CD4-positive, alpha-beta T cell (primary cell): ENCODE measurements at regions of chr10 and their contacts with region 1.

Region 1: GRCh38 chr10:74176380-74177139 is 25.5 kb downstream of the ADK start:
- DNase-seq: peak; percentile 91 to 99 (median 94)
- ATAC-seq: peak; percentile 95
- H3K4me3 ChIP-seq: peak overlapping the region; percentile 84
- H3K4me3 Mint-ChIP-seq: peak overlapping the region; percentile 95
- H3K27ac ChIP-seq: peak overlapping the region; percentile 84 to 90
- H3K27ac Mint-ChIP-seq: peak overlapping the region; percentile 98
- H3K4me1 ChIP-seq: peaks cover 26% of the 10 kb centered on the region
- H3K4me1 Mint-ChIP-seq: peaks cover 47% of the 10 kb centered on the region
- H3K27me3 ChIP-seq: no peaks in the 10 kb centered on the region
- H3K27me3 Mint-ChIP-seq: no peaks in the 10 kb centered on the region
- CTCF ChIP-seq: no peak

Region 2: GRCh38 chr10:73591935-73592699 is 584.4 kb before region 1 on chr10:
- CTCF ChIA-PET with region 1: no interaction called
- POLR2A ChIA-PET with region 1: no interaction called
- intact Hi-C with region 1: no loop called
- DNase-seq: peak in 9 of 14 experiments; percentile 1 to 47 (median 21)
- ATAC-seq: peak; percentile 54
- H3K4me3 ChIP-seq: no peak overlapping the region
- H3K4me3 Mint-ChIP-seq: peak overlapping the region; percentile 65
- H3K27ac ChIP-seq: peak overlapping the region in 1 of 2 donors; percentile 10
- H3K27ac Mint-ChIP-seq: peak overlapping the region; percentile 55
- H3K4me1 ChIP-seq: peaks cover 9% of the 10 kb centered on the region
- H3K4me1 Mint-ChIP-seq: peaks cover 23% of the 10 kb centered on the region
- H3K27me3 ChIP-seq: no peaks in the 10 kb centered on the region
- H3K27me3 Mint-ChIP-seq: no peaks in the 10 kb centered on the region
- CTCF ChIP-seq: no peak

Region 3: DNA sequence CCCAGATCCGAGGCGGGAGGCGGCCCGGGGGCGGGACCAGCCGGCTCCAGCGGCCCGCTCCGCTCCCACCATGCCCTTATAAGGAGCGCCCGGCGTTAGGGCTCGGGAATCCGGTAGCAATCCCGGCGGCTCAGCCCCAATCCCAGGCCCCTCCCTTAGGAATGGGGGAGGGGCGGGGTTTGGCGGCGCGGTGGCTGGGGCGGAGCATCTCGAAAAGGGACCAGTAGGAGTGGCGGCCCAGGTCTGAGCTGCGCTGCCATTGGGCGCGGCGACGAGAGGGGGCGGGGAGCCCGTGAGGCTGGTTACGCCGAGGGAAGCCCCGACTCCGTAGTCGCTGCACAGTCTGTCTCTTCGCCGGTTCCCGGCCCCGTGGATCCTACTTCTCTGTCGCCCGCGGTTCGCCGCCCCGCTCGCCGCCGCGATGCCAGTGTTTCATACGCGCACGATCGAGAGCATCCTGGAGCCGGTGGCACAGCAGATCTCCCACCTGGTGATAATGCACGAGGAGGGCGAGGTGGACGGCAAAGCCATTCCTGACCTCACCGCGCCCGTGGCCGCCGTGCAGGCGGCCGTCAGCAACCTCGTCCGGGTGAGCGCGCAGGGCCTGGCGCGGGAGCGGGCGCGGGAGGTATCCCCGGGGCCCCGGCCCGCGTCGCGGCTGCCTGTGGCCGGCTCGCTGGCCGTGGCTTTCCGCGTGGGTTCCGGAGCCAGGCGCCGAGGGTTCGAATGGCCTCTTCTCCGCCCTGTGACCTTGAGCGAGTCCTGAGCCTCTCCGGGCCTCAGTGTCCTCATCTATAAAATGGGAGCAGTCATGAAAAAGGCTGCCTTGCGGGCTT is 178.6 kb before region 1 on chr10 and contains the start of gene VCL:
- CTCF ChIA-PET with region 1: no interaction called
- POLR2A ChIA-PET with region 1: no interaction called
- intact Hi-C with region 1: loop called in 1 of 2 experiments (anchors 10 kb)
- DNase-seq: peak; percentile 88 to 98 (median 94)
- ATAC-seq: peak; percentile 95
- H3K4me3 ChIP-seq: peak within 1 kb of the TSS; percentile 95
- H3K4me3 Mint-ChIP-seq: peak within 1 kb of the TSS; percentile 100
- H3K27ac ChIP-seq: peak within 1 kb of the TSS; percentile 45 to 84
- H3K27ac Mint-ChIP-seq: peak within 1 kb of the TSS; percentile 83
- H3K4me1 ChIP-seq: peaks cover 42% of the 10 kb centered on the region
- H3K4me1 Mint-ChIP-seq: peaks cover 62% of the 10 kb centered on the region
- H3K27me3 ChIP-seq: no peaks in the 10 kb centered on the region
- H3K27me3 Mint-ChIP-seq: no peaks in the 10 kb centered on the region
- CTCF ChIP-seq: no peak
- total RNA-seq, gene VCL: 18.5 to 19.7 TPM

Region 4: GRCh38 chr10:74067373-74068352 is 108.9 kb before region 1 on chr10:
- CTCF ChIA-PET with region 1: no interaction called
- POLR2A ChIA-PET with region 1: no interaction called
- intact Hi-C with region 1: no loop called
- DNase-seq: no peak
- ATAC-seq: no peak
- H3K4me3 ChIP-seq: no peak overlapping the region
- H3K4me3 Mint-ChIP-seq: no peak overlapping the region
- H3K27ac ChIP-seq: no peak overlapping the region
- H3K27ac Mint-ChIP-seq: no peak overlapping the region
- H3K4me1 ChIP-seq: no peaks in the 10 kb centered on the region
- H3K4me1 Mint-ChIP-seq: no peaks in the 10 kb centered on the region
- H3K27me3 ChIP-seq: no peaks in the 10 kb centered on the region
- H3K27me3 Mint-ChIP-seq: no peaks in the 10 kb centered on the region
- CTCF ChIP-seq: no peak

Region 5: GRCh38 chr10:74189999-74190421 is 13.4 kb after region 1 on chr10:
- CTCF ChIA-PET with region 1: interaction called, 6 read pairs
- POLR2A ChIA-PET with region 1: interaction called, 46 read pairs
- intact Hi-C with region 1: loop called in 1 of 2 experiments (anchors 1 kb)
- DNase-seq: peak in 10 of 14 experiments; percentile 7 to 64 (median 14)
- ATAC-seq: peak; percentile 52
- H3K4me3 ChIP-seq: peak overlapping the region; percentile 19
- H3K4me3 Mint-ChIP-seq: peak overlapping the region; percentile 32
- H3K27ac ChIP-seq: peak overlapping the region; percentile 25 to 81
- H3K27ac Mint-ChIP-seq: peak overlapping the region; percentile 88
- H3K4me1 ChIP-seq: peaks cover 20% of the 10 kb centered on the region
- H3K4me1 Mint-ChIP-seq: peaks cover 70% of the 10 kb centered on the region
- H3K27me3 ChIP-seq: no peaks in the 10 kb centered on the region
- H3K27me3 Mint-ChIP-seq: no peaks in the 10 kb centered on the region
- CTCF ChIP-seq: no peak

Region 6: DNA sequence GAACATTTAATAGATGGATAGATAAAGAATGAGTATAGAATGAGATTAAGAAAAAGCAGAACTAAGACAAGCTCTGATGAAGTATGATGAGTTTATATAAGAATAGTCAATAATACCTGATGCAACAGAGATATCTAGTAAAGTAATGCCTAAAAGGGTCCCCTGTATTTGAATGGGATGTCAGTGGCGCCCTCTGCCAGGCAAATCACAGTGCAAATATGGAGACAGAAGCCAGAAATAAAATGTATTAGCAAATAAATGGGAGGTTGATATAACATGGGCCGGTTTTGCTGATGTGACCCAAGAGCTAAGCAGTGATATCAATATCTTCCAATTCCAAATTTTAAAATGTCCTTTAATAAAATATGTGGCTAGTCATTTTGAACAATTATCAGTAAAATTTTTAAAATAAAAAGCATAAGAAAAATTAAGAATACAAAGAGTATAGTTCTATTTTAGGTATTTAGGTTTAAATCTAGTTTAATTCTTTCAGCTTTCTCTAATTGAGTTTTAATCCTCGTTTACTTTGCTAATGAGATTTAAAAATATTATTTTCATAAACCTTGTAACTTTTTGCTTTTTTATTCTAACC is 37.1 kb after region 1 on chr10:
- CTCF ChIA-PET with region 1: interaction called, 3 read pairs
- POLR2A ChIA-PET with region 1: interaction called, 4 read pairs
- intact Hi-C with region 1: loop called in 1 of 2 experiments (anchors 2 kb)
- DNase-seq: peak; percentile 19 to 74 (median 54)
- ATAC-seq: peak; percentile 74
- H3K4me3 ChIP-seq: no peak overlapping the region
- H3K4me3 Mint-ChIP-seq: no peak overlapping the region
- H3K27ac ChIP-seq: no peak overlapping the region
- H3K27ac Mint-ChIP-seq: no peak overlapping the region
- H3K4me1 ChIP-seq: no peaks in the 10 kb centered on the region
- H3K4me1 Mint-ChIP-seq: peaks cover 15% of the 10 kb centered on the region
- H3K27me3 ChIP-seq: no peaks in the 10 kb centered on the region
- H3K27me3 Mint-ChIP-seq: no peaks in the 10 kb centered on the region
- CTCF ChIP-seq: peak; percentile 69

Region 7: GRCh38 chr10:74227697-74228424 is 51.3 kb after region 1 on chr10:
- CTCF ChIA-PET with region 1: no interaction called
- POLR2A ChIA-PET with region 1: interaction called, 28 read pairs
- intact Hi-C with region 1: loop called (anchors 1 to 5 kb)
- DNase-seq: peak in 6 of 14 experiments; percentile 10 to 63 (median 45)
- ATAC-seq: peak; percentile 82
- H3K4me3 ChIP-seq: no peak overlapping the region
- H3K4me3 Mint-ChIP-seq: peak overlapping the region; percentile 71
- H3K27ac ChIP-seq: peak overlapping the region in 1 of 2 donors; percentile 71
- H3K27ac Mint-ChIP-seq: peak overlapping the region; percentile 80
- H3K4me1 ChIP-seq: peaks cover 12% of the 10 kb centered on the region
- H3K4me1 Mint-ChIP-seq: peaks cover 44% of the 10 kb centered on the region
- H3K27me3 ChIP-seq: no peaks in the 10 kb centered on the region
- H3K27me3 Mint-ChIP-seq: no peaks in the 10 kb centered on the region
- CTCF ChIP-seq: no peak

Region 8: DNA sequence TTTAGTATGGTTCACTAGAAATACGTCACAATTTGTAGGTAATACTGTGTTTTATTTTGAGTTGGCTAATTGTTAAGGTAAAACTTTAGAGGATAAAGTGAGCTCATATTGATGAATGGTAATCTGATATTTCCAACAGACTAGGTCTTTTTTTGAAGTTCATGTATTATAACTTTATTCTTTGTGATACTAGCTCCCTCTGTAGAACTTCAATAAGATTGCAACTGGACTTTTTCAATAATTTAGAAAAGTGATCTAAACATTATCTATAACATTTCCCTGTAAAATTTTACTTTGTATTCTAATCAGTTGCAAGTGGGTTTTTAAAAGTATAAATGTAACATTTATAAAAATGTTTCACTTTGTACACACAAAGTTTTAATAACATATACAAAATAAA is 58.0 kb after region 1 on chr10:
- CTCF ChIA-PET with region 1: no interaction called
- POLR2A ChIA-PET with region 1: interaction called, 28 read pairs
- intact Hi-C with region 1: loop called in 1 of 2 experiments (anchors 5 kb)
- DNase-seq: peak in 2 of 14 experiments; percentile 16 to 35
- ATAC-seq: no peak
- H3K4me3 ChIP-seq: no peak overlapping the region
- H3K4me3 Mint-ChIP-seq: no peak overlapping the region
- H3K27ac ChIP-seq: no peak overlapping the region
- H3K27ac Mint-ChIP-seq: no peak overlapping the region
- H3K4me1 ChIP-seq: no peaks in the 10 kb centered on the region
- H3K4me1 Mint-ChIP-seq: peaks cover 11% of the 10 kb centered on the region
- H3K27me3 ChIP-seq: no peaks in the 10 kb centered on the region
- H3K27me3 Mint-ChIP-seq: no peaks in the 10 kb centered on the region
- CTCF ChIP-seq: peak; percentile 66

Region 9: GRCh38 chr10:74542065-74542464 is 365.5 kb after region 1 on chr10:
- CTCF ChIA-PET with region 1: no interaction called
- POLR2A ChIA-PET with region 1: no interaction called
- intact Hi-C with region 1: no loop called
- DNase-seq: no peak
- ATAC-seq: no peak
- H3K4me3 ChIP-seq: no peak overlapping the region
- H3K4me3 Mint-ChIP-seq: no peak overlapping the region
- H3K27ac ChIP-seq: no peak overlapping the region
- H3K27ac Mint-ChIP-seq: no peak overlapping the region
- H3K4me1 ChIP-seq: no peaks in the 10 kb centered on the region
- H3K4me1 Mint-ChIP-seq: peaks cover 6% of the 10 kb centered on the region
- H3K27me3 ChIP-seq: no peaks in the 10 kb centered on the region
- H3K27me3 Mint-ChIP-seq: no peaks in the 10 kb centered on the region
- CTCF ChIP-seq: no peak